Activated T-helper 2 cell treated with anti-CD3 and anti-CD28 coated beads, Interferon-gamma antibody, Interleukin-2, Interleukin-4, amounts not matched to agents 10 μg/mL and 5 μg/mL and 100 μg/mL, durations not matched to agents 14 hours and 24 hours and 36 hours (primary cell): ENCODE measurements at regions of chr3 and their contacts with region 1.

Region 1: DNA sequence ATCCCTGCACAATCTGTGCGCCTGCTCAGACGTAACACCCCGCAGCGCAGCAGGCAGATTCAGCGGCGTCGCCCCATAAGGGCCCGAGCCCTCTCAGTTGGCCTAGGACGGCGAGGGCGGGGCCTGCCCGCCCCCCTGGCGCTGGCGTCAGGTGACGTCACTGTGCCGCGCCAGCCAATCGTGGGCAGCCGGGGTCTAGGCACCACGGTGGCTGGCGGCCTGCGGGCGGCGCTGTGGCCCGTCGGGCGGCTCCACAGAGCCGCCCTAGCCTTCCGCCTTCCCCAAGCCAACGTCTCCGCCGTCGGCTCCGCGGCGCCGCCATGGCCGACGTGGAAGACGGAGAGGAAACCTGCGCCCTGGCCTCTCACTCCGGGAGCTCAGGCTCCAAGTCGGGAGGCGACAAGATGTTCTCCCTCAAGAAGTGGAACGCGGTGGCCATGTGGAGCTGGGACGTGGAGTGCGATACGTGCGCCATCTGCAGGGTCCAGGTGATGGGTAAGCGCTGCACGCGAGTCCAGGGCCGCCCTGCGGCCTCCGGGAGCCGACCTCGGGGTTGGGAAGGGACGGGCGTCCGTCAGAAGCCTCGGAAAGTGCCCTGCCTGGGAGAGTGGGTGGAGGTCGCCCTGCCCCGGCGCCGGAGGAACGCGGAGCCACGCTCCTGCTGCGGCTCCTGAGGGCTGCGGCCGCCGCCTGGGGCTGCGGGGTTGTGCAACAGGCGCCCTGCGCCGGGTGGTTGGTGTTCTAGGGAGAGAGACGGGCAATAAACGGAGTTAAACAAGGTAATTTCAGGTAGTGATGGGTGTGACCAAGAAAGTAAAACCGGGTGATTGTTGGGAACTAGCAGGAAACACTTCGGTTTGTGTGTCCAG is at the start of gene RNF7:
- DNase-seq: peak; percentile 96
- H3K4me3 Mint-ChIP-seq: peak within 1 kb of the TSS; percentile 99
- H3K27ac Mint-ChIP-seq: peak within 1 kb of the TSS; percentile 99
- H3K4me1 Mint-ChIP-seq: peaks cover 22% of the 10 kb centered on the region
- H3K27me3 Mint-ChIP-seq: peaks cover 3% of the 10 kb centered on the region
- total RNA-seq, gene RNF7: 70.8 and 74.8 TPM in 2 replicates

Region 2: GRCh38 chr3:141544697-141545096 is 193.6 kb before region 1 on chr3:
- intact Hi-C with region 1: no loop called
- DNase-seq: no peak
- H3K4me3 Mint-ChIP-seq: no peak overlapping the region
- H3K27ac Mint-ChIP-seq: peak overlapping the region; percentile 28
- H3K4me1 Mint-ChIP-seq: peaks cover 50% of the 10 kb centered on the region
- H3K27me3 Mint-ChIP-seq: no peaks in the 10 kb centered on the region

Region 3: DNA sequence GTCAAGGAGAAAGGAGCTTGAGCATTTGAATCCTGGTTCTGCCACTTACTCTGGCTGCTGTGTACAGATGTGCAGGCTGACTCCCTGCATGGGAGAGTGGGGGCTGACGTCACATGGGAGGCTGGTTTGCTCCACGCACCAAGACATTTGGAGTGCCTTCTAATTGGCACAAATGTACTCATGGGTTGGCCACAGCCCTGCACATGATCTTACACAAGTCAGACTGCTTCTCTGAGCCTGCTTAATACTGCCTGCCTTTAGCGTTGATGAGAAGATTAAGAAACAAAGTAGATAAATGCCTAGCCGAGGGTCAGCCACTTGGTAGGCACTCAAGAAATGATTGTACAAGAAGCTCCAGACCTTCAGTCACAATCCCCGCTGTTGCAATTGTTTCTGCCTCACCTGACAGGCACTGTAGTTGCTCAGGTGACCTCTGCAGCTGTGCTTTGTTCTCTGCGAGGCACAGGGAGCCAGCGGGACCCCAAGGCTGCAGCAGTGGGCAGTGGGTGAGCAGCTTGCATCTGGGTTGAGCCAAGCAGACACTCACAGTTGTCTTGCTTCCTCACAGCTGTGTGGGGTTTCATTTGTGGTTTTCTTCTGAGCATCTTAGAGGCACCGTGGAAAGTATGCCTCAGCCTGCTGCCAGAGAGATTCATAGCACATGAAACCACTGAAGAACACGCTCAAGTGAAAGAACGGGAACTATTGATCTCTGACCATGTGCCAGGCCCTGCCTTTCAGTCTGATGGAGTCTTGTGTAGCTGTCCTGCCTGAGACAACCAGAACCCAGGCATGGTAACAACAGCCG is 58.0 kb after region 1 on chr3:
- intact Hi-C with region 1: loop called (anchors 1 kb)
- DNase-seq: peak; percentile 74
- H3K4me3 Mint-ChIP-seq: peak overlapping the region; percentile 81
- H3K27ac Mint-ChIP-seq: peak overlapping the region; percentile 99
- H3K4me1 Mint-ChIP-seq: peaks cover 44% of the 10 kb centered on the region
- H3K27me3 Mint-ChIP-seq: no peaks in the 10 kb centered on the region

Region 4: DNA sequence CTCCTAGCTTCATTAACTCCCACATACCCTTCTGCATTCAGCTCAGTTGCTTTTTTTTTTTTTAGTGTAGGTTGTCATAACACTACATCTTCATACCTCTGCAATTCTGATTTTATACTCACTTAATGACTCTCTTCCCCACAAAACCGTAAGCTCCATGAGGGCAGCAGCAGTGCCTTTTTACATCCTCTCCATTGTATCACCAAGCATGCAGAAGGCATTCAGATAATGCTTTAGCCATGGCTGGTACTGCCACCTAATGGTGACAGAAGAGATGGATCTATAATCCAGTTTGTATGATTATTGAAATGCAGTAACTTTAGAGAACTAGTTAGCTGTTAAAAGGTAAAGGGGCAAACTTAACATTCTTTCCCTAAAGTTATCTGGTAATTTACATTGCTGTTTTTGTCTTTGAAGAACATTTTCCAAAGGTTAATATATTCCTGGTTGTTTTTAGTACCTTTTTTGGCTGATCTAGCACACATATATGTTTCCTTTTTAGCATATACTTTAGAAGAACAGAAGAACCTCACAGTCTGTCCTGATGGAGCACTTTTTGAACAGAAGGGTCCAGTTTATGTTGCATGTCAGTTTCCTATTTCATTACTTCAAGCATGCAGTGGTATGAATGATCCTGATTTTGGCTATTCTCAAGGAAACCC is 175.0 kb after region 1 on chr3:
- intact Hi-C with region 1: loop called (anchors 1 kb)
- DNase-seq: peak; percentile 30
- H3K4me3 Mint-ChIP-seq: no peak overlapping the region
- H3K27ac Mint-ChIP-seq: no peak overlapping the region
- H3K4me1 Mint-ChIP-seq: peaks cover 8% of the 10 kb centered on the region
- H3K27me3 Mint-ChIP-seq: no peaks in the 10 kb centered on the region

Region 5: DNA sequence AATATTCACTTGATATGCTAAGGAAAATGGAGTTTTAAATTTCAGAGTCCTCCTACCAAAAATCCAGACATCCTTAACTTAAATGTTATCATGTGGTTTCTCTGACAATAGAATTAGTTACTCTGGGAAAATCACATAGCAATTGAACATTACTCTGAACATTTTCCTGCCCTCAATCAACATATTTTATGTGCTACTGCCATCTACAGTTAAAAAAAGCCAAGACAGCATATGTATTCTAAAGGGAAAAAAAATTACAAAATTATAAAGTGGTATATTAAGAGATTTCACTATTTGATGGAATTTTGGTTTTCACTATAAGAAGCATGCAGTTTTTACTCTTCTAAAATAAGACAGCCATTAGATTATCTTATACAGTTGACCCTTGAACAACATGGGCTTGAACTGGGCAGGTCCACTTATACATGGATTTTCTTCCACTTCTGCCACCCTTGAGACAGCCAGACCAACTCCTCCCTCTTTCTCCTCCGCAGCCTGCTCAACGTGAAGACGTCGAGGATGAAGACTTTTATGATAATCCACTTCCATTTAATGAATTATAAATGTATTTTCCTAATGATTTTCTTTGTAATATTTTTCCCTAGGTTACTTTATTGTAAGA is 260.5 kb after region 1 on chr3:
- intact Hi-C with region 1: loop called (anchors 2 kb)
- DNase-seq: no peak
- H3K4me3 Mint-ChIP-seq: no peak overlapping the region
- H3K27ac Mint-ChIP-seq: no peak overlapping the region
- H3K4me1 Mint-ChIP-seq: no peaks in the 10 kb centered on the region
- H3K27me3 Mint-ChIP-seq: no peaks in the 10 kb centered on the region

Region 6: GRCh38 chr3:142279965-142280590 is 541.8 kb after region 1 on chr3:
- intact Hi-C with region 1: loop called (anchors 10 kb)
- DNase-seq: peak; percentile 26
- H3K4me3 Mint-ChIP-seq: no peak overlapping the region
- H3K27ac Mint-ChIP-seq: peak overlapping the region; percentile 24
- H3K4me1 Mint-ChIP-seq: peaks cover 28% of the 10 kb centered on the region
- H3K27me3 Mint-ChIP-seq: no peaks in the 10 kb centered on the region